ENCODE measurements at regions of chr3 and their contacts with region 1.

Region 1: GRCh38 chr3:129824926-129825541 is 68.5 kb downstream of the TMCC1 start:
- DNase-seq: peak; percentile 40
- CTCF ChIP-seq: peak; percentile 61

Region 2: DNA sequence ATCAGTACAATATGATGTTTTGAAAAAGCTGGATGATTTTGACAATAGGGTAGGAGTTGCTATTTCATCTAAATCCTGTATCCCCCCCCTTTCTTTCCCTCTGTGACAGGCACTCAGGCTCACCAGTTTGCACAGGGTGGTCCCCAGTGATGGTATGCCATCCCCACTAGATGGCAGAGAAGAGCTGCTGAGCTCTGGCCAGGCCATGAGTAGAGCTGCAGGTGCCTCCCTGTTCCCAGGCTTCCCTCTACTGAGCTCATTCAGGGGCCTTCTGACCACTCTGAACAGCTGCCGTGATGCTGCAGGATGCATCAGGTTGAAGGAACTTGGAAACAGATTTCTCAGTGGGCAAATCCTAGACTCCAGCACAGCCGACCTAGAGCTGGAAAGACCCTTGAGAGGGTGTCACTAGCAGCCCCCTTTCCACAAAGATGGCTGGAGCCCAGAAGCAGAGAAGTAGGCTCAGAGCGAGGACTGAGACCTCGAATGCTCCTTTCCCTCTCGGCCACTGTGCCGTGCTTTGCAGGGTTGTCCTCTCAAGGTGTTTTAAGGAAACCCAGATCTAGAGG is 441.7 kb before region 1 on chr3:
- in situ Hi-C with region 1: no loop called
- DNase-seq: peak; percentile 81
- CTCF ChIP-seq: peak; percentile 68

Region 3: DNA sequence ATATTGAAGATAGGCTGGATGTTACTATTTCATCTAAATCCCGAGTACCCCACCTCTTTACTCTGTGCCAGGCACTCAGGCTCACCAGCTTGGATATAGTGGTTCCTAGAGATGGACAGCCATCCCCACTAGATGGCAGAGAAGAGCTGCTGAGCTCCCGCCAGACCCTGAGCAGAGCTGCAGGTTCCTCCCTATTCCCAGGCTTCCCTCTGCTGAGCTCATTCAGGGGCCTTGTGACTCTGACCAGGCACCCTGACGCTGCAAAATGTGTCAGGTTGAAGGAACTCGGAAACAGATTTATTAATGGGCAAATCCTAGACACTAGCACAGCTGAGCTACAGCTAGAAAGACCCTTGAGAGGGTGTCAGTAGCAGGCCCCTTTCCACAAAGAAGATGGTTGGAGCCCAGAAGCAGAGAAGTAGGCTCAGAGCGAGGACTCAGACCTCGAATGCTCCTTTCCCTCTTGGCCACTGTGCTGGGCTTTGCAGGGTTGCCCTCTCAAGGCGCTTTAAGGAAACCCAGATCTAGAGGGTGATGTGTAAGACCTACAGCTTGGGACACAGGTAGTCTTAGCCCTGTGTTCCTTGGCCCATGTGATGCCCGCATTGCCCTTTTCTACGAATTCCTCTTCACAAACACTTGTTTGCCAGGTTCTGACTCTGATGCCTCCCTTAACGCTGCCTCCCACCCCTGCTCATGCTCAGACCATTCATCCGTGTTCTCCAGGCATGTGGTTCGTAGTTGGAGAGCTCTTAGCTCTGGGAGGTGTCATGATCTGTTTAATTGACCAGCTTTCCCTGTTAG is 334.6 kb before region 1 on chr3:
- in situ Hi-C with region 1: loop called (anchors 25 kb)
- DNase-seq: peak; percentile 84
- CTCF ChIP-seq: peak; percentile 78

Region 4: GRCh38 chr3:129650256-129650872 is 174.7 kb before region 1 on chr3:
- in situ Hi-C with region 1: loop called (anchors 5 kb)
- DNase-seq: peak; percentile 68
- CTCF ChIP-seq: peak; percentile 59

Region 5: GRCh38 chr3:129934234-129935123 is 109.4 kb after region 1 on chr3:
- in situ Hi-C with region 1: loop called (anchors 10 kb)
- DNase-seq: peak; percentile 64
- CTCF ChIP-seq: peak; percentile 89